Psoas muscle (tissue), 8 donors: ENCODE measurements at regions of chr16 and their contacts with region 1.

Region 1: DNA sequence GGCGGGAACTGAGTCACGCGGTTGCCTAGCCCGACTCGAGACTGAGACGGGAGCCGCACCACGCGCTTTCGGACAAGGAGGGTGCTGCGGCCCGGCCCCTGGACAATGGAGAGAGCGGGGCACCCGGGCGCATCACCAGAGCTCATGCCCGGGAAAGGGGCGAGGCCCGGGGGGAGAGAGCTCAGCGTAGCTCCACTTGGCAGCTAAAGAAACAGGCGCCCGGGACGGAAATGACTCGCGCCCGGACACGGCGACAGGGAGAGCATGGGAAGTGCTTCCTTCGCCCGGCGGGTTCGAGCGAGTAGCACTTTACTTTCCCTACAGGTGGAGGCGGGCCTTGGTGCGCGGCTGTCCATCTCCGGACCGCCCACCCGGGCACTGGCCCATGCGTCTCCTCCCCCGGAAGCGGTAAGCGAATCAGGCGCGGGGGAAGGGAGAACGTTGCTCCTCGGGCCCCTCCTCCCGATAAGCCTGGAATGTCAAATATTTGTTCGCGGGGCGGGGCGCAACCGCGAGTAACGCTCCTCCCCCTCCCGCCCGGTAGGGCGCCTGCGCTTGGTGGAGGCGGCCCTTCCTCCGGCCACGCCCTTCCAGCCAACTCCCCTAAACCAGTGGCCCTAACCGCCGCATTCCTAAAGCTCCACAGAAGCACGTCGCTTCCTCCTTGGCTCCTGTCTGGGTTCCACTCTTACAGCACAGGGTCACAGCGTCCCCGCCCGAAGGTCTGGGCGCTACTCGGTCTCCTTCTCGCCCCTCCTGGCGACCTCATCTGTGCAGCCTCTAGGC is 1.5 kb upstream of the ESRP2 start:
- DNase-seq: peak; percentile 97 to 98
- ATAC-seq: peak; percentile 86 to 91 (median 89)
- H3K4me3 ChIP-seq: peak overlapping the region; percentile 71
- H3K27ac ChIP-seq: peak overlapping the region; percentile 90
- H3K4me1 ChIP-seq: peaks cover 11% of the 10 kb centered on the region
- H3K27me3 ChIP-seq: no peaks in the 10 kb centered on the region
- CTCF ChIP-seq: no peak

Region 2: DNA sequence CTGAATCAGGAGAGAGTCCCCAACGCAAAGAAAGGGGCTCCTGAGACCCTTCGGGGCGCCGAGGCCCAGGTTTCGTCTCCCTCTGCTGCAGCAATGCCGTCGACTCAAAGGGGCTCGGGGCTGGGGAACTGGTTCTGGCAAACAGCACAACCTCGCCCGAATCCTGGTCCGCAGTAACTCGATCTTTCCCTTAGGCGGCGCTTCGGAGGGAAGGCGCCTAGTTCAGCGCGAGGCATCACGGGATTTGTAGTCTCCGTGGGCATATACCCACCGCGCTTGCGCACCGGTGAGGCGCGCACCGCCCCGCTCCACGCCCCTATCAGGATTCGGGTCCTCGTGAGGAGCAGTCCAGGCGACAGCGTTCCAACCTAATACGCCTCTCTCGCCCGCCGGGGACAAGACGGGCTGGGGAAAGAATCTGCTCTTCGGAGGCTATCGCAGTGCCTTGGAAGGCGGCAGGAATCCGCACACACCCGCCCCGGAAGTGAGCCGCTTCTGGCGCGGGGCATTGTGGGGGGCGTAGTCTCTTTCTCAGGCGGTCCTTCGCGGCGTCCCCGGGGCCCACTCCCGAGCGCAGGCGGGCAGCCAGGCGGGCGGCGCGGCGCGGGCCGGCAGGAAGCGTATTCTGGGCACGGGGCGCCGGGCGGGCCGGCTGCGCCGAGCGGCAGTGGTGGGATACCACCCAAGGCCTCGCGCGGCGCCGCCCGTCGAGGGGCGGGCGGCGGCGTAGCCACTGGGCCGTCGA is 395.5 kb before region 1 on chr16 and contains the start of gene THAP11:
- intact Hi-C with region 1: loop called in 1 of 2 experiments (anchors 10 kb)
- DNase-seq: peak; percentile 93 to 97
- ATAC-seq: peak; percentile 78 to 81 (median 81)
- H3K4me3 ChIP-seq: peak within 1 kb of the TSS; percentile 100
- H3K27ac ChIP-seq: peak within 1 kb of the TSS; percentile 100
- H3K4me1 ChIP-seq: peaks cover 32% of the 10 kb centered on the region
- H3K27me3 ChIP-seq: no peaks in the 10 kb centered on the region
- CTCF ChIP-seq: peak; percentile 79
- total RNA-seq, gene THAP11: 30.2 to 37.8 (median 35.0) TPM

Region 3: DNA sequence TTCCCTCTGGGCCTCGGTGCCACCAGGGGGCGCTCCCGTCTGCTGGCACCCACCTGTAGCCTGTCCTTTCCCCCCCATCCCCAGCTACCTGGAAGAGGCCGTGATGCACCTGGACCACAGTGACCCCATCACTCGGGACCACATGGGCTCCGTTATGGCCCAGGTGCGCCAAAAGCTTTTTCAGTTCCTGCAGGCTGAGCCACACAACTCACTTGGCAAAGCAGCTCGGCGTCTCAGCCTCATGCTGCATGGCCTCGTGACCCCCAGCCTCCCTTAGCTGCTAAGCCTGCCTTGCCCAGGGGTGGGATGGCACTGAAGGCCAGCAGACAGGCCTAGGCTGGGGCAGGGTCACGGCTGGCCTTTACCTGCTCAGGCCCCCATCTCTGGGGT is 353.6 kb before region 1 on chr16:
- intact Hi-C with region 1: loop called in 1 of 2 experiments (anchors 10 kb)
- DNase-seq: peak; percentile 64 to 80
- ATAC-seq: peak in 3 of 4 donors; percentile 21 to 48 (median 25)
- H3K4me3 ChIP-seq: no peak overlapping the region
- H3K27ac ChIP-seq: peak overlapping the region; percentile 93
- H3K4me1 ChIP-seq: peaks cover 61% of the 10 kb centered on the region
- H3K27me3 ChIP-seq: no peaks in the 10 kb centered on the region
- CTCF ChIP-seq: peak; percentile 81

Region 4: GRCh38 chr16:68298907-68299561 is 61.6 kb after region 1 on chr16:
- intact Hi-C with region 1: no loop called
- DNase-seq: peak; percentile 63 to 83
- ATAC-seq: peak; percentile 52 to 64 (median 54)
- H3K4me3 ChIP-seq: no peak overlapping the region
- H3K27ac ChIP-seq: peak overlapping the region; percentile 64
- H3K4me1 ChIP-seq: peaks cover 29% of the 10 kb centered on the region
- H3K27me3 ChIP-seq: no peaks in the 10 kb centered on the region
- CTCF ChIP-seq: no peak